WTC11 (cell line): ENCODE measurements at regions of chr22 and their contacts with region 1.

Region 1: GRCh38 chr22:19122143-19122751 is at the start of gene DGCR2:
- DNase-seq: peak; percentile 98
- ATAC-seq: peak; percentile 99
- H3K4me3 Mint-ChIP-seq: peak within 1 kb of the TSS; percentile 81
- H3K27ac Mint-ChIP-seq: peak within 1 kb of the TSS; percentile 71
- H3K4me1 Mint-ChIP-seq: peaks cover 27% of the 10 kb centered on the region
- H3K27me3 Mint-ChIP-seq: no peaks in the 10 kb centered on the region; the same call in 1 of the 2 replicates
- CTCF ChIP-seq: no peak
- total RNA-seq, gene DGCR2: 56.8 to 64.2 TPM (median 60.3 TPM) in 3 replicates

Region 2: DNA sequence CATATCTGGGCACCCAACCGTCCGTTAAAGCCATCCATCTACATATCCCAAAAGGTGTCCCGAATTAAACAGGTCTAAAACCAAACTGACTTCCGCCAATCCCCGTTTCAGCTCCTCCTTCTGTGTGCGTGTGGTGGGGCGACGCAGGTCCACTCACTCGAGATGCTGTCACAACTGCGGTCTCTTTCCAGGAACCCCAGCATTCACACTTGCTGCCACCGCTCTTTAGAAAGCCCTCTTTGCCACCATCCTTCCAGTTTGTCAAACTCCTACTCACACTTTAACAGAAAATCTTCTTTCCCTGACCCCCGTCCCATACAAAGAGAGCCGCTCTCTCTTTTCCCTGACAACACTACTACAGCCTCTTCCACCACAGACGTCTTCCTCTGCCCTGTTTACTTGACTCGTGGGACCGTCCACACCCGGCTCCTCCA is 21.7 kb after region 1 on chr22:
- CTCF ChIA-PET with region 1: interaction called, 11 read pairs
- POLR2A ChIA-PET with region 1: interaction called, 8 read pairs
- DNase-seq: no peak
- ATAC-seq: no peak
- H3K4me3 Mint-ChIP-seq: peak overlapping the region; percentile 100
- H3K27ac Mint-ChIP-seq: peak overlapping the region; percentile 94
- H3K4me1 Mint-ChIP-seq: peaks cover 20% of the 10 kb centered on the region
- H3K27me3 Mint-ChIP-seq: peaks cover 36% of the 10 kb centered on the region
- CTCF ChIP-seq: no peak

Region 3: DNA sequence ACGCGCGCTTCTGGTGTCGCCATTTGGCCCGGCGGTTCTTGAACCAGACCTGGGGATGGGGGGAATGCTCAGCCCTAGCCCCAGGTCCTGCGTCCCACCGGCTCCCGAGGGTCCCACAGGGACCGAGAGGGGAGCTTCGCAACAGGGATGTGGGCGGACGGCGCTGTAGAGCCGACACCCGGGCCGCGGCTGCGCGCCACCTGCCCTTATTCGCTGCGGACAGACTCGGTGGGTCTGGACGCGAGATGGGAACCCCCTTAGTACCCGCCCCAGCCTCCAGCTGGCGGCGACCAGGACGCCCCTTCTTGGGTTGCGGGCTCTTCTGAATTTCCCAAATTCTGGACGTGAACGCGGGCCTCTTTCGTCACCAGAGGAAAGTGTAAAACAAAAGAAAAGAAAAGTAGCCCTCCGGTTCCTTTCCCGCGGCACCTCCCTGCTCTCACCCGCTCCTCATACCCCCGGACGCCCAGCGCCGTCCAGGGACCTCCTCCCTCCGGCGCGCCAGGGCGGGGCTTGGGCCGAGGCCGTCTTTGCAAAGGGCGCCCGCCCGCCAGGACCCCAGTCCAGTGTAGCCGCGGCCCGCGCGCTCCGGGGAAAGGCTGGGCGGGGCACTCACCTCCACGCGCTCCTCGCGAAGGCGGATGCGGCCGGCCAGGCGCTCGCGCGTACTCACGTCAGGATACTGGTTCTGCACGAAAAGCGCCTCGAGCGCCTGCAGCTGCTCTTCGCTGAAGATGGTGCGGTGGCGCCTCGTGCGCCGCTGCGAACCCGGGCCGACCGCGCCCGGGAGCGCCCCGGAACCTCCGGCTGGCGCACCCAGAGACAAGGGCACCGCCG is 27.0 kb after region 1 on chr22:
- CTCF ChIA-PET with region 1: interaction called, 11 read pairs
- POLR2A ChIA-PET with region 1: interaction called, 8 read pairs
- DNase-seq: peak; percentile 65
- ATAC-seq: peak; percentile 33
- H3K4me3 Mint-ChIP-seq: peak overlapping the region; percentile 66
- H3K27ac Mint-ChIP-seq: no peak overlapping the region
- H3K4me1 Mint-ChIP-seq: peaks cover 18% of the 10 kb centered on the region
- H3K27me3 Mint-ChIP-seq: peaks cover 78% of the 10 kb centered on the region
- CTCF ChIP-seq: no peak